CD4-positive, alpha-beta T cell (primary cell): ENCODE measurements at regions of chr12 and their contacts with region 1.

Region 1: DNA sequence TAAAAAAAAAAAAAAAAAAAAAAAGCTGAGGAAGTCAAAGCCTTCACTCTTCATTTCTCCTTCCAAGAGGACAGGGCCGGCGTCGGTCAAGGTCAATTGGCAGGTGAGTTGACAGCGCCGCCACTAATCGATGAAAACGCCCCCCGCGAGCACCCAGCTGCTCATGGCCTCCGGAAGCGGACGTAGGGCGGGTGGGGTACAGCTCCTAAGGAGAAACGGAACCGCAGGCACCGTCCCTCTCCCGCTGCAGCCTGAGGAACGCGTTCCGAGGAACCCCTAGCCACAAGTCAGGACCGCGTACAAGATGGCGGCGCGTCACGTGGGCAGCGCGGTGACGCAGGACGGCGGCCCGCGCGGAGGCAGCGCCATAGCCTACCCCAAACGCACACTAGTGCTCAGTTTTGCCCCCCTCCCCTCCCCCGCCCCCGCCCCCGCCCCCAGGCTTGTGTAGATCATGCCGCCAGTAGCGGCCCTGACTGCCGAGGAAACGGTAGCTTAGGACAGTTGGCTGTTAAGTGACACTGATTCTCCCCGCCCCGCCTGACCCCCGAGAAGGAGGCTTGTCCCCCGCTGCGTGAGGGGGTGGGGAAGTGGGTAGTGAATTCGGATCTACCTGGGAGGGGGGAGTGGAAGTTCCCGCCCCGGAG is at the start of gene ATF1:
- DNase-seq: peak; percentile 79 to 96 (median 86)
- ATAC-seq: peak; percentile 76
- H3K4me3 ChIP-seq: peak within 1 kb of the TSS; percentile 83
- H3K4me3 Mint-ChIP-seq: peak within 1 kb of the TSS; percentile 91
- H3K27ac ChIP-seq: peak within 1 kb of the TSS; percentile 92 to 96
- H3K27ac Mint-ChIP-seq: peak within 1 kb of the TSS; percentile 93
- H3K4me1 ChIP-seq: peaks cover 27% of the 10 kb centered on the region
- H3K4me1 Mint-ChIP-seq: peaks cover 50% of the 10 kb centered on the region
- H3K27me3 ChIP-seq: no peaks in the 10 kb centered on the region
- H3K27me3 Mint-ChIP-seq: no peaks in the 10 kb centered on the region
- CTCF ChIP-seq: no peak
- total RNA-seq, gene ATF1: 11.3 TPM

Region 2: GRCh38 chr12:50111693-50112455 is 651.9 kb before region 1 on chr12 and contains the start of gene COX14:
- CTCF ChIA-PET with region 1: interaction called, 3 read pairs
- POLR2A ChIA-PET with region 1: interaction called, 15 read pairs
- intact Hi-C with region 1: no loop called
- DNase-seq: peak; percentile 97 to 100 (median 99)
- ATAC-seq: peak; percentile 83
- H3K4me3 ChIP-seq: peak within 1 kb of the TSS; percentile 100
- H3K4me3 Mint-ChIP-seq: peak within 1 kb of the TSS; percentile 95
- H3K27ac ChIP-seq: peak within 1 kb of the TSS; percentile 87 to 97
- H3K27ac Mint-ChIP-seq: peak within 1 kb of the TSS; percentile 96
- H3K4me1 ChIP-seq: peaks cover 55% of the 10 kb centered on the region
- H3K4me1 Mint-ChIP-seq: peaks cover 39% of the 10 kb centered on the region
- H3K27me3 ChIP-seq: no peaks in the 10 kb centered on the region
- H3K27me3 Mint-ChIP-seq: no peaks in the 10 kb centered on the region
- CTCF ChIP-seq: peak; percentile 97
- total RNA-seq, gene COX14: 51.1 to 52.8 TPM

Region 3: GRCh38 chr12:50751948-50752721 is 11.6 kb before region 1 on chr12:
- CTCF ChIA-PET with region 1: interaction called, 4 read pairs
- POLR2A ChIA-PET with region 1: interaction called, 11 read pairs
- intact Hi-C with region 1: no loop called
- DNase-seq: no peak
- ATAC-seq: no peak
- H3K4me3 ChIP-seq: no peak overlapping the region
- H3K4me3 Mint-ChIP-seq: no peak overlapping the region
- H3K27ac ChIP-seq: no peak overlapping the region
- H3K27ac Mint-ChIP-seq: no peak overlapping the region
- H3K4me1 ChIP-seq: no peaks in the 10 kb centered on the region
- H3K4me1 Mint-ChIP-seq: no peaks in the 10 kb centered on the region
- H3K27me3 ChIP-seq: no peaks in the 10 kb centered on the region
- H3K27me3 Mint-ChIP-seq: no peaks in the 10 kb centered on the region
- CTCF ChIP-seq: no peak

Region 4: DNA sequence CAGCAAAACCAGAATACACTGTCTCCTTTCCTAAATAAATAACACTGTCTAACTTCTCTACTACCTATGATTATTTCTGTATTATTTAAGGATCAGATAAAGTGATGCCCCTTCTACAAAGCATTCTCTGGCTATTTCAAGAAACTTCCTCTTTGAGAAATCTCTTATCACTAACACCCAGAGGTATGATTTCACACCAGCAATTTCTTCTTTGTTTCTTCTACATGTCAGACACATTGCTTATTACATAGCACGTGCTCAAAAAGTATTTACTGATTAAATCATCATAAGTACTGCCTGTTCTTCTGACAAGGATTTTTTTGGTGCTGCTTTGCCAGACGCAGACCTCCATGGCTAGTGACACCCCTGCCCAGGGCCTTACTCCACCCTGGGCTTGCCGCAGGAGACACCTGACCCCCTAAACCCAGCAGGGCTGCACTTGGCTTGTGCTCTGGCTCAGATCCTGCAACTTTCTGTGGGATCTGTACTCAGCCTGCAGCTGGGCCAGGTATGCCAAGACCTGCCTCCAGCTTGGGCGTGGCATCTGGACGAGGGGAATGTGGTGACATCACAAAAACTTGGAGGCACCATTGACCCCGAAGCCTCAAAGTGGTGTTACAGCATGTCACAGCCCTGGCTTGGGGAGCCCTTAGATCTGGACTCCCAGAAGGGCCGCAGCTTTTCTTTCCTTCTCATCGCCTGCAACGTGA is 173.2 kb after region 1 on chr12:
- CTCF ChIA-PET with region 1: no interaction called
- POLR2A ChIA-PET with region 1: no interaction called
- intact Hi-C with region 1: no loop called
- DNase-seq: no peak
- ATAC-seq: no peak
- H3K4me3 ChIP-seq: no peak overlapping the region
- H3K4me3 Mint-ChIP-seq: no peak overlapping the region
- H3K27ac ChIP-seq: no peak overlapping the region
- H3K27ac Mint-ChIP-seq: no peak overlapping the region
- H3K4me1 ChIP-seq: no peaks in the 10 kb centered on the region
- H3K4me1 Mint-ChIP-seq: no peaks in the 10 kb centered on the region
- H3K27me3 ChIP-seq: no peaks in the 10 kb centered on the region
- H3K27me3 Mint-ChIP-seq: no peaks in the 10 kb centered on the region
- CTCF ChIP-seq: no peak

Region 5: DNA sequence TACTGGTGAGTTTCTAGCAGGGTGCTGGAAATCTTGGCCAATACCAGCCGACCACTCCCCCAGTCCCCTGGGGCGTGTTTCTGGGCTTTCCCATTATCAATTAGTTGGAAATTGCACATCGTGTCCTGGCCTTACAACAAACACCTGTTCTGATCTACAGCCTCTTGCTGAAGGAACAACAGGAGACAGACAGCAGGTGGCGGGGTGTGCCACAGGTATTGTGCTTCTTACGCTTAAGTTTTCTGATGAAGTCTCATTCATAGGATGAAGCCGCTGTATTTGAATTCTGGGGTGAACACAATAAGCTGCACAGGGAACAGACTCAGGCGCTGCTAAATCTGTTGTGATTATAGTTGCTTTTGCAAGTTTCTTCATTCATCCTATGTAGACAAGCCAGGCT is 189.3 kb after region 1 on chr12:
- CTCF ChIA-PET with region 1: no interaction called
- POLR2A ChIA-PET with region 1: no interaction called
- intact Hi-C with region 1: no loop called
- DNase-seq: peak in 1 of 14 experiments; percentile 4
- ATAC-seq: no peak
- H3K4me3 ChIP-seq: no peak overlapping the region
- H3K4me3 Mint-ChIP-seq: no peak overlapping the region
- H3K27ac ChIP-seq: no peak overlapping the region
- H3K27ac Mint-ChIP-seq: no peak overlapping the region
- H3K4me1 ChIP-seq: no peaks in the 10 kb centered on the region
- H3K4me1 Mint-ChIP-seq: no peaks in the 10 kb centered on the region
- H3K27me3 ChIP-seq: no peaks in the 10 kb centered on the region
- H3K27me3 Mint-ChIP-seq: no peaks in the 10 kb centered on the region
- CTCF ChIP-seq: no peak

Region 6: DNA sequence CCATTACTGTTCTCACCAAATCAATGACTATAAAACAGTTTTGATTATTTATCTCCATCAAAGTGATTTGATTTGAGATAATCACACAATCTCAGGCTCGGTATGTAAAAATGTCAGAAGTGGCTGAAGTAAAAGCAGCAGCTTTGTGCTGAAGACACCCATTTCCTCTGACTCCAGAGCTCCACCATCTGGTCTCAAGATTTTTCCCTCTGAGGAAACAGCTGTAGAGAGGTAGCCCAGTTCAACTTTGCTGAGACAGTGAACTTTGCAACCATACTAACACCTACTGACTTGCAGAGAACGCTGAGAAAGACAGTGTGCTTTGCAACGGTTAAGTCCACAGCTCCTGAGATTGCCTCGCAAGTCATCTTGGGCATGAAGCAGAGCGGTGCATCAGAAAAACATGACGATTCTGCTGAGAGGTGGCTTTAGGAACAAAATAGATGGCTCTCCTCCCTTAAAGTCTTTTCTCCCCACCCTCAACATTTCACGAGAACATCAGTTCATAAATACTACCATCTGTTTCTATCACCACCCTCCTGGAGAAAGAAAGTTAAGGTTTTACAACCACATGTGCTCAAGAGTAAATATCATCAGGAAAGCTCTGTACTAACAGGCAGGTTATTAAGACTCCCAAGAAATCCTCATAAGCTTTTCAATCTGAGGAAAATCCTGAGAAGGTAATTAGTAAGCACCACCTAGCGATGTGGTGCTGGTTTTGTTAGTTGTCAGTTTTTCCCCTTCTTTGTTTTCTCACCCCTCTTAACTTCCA is 223.4 kb after region 1 on chr12:
- CTCF ChIA-PET with region 1: interaction called, 6 read pairs
- POLR2A ChIA-PET with region 1: interaction called, 17 read pairs
- intact Hi-C with region 1: loop called (anchors 1 to 2 kb)
- DNase-seq: peak in 10 of 14 experiments; percentile 5 to 59 (median 11)
- ATAC-seq: peak; percentile 78
- H3K4me3 ChIP-seq: no peak overlapping the region
- H3K4me3 Mint-ChIP-seq: no peak overlapping the region
- H3K27ac ChIP-seq: no peak overlapping the region
- H3K27ac Mint-ChIP-seq: peak overlapping the region; percentile 65
- H3K4me1 ChIP-seq: no peaks in the 10 kb centered on the region
- H3K4me1 Mint-ChIP-seq: peaks cover 9% of the 10 kb centered on the region
- H3K27me3 ChIP-seq: no peaks in the 10 kb centered on the region
- H3K27me3 Mint-ChIP-seq: no peaks in the 10 kb centered on the region
- CTCF ChIP-seq: peak; percentile 58

Region 7: DNA sequence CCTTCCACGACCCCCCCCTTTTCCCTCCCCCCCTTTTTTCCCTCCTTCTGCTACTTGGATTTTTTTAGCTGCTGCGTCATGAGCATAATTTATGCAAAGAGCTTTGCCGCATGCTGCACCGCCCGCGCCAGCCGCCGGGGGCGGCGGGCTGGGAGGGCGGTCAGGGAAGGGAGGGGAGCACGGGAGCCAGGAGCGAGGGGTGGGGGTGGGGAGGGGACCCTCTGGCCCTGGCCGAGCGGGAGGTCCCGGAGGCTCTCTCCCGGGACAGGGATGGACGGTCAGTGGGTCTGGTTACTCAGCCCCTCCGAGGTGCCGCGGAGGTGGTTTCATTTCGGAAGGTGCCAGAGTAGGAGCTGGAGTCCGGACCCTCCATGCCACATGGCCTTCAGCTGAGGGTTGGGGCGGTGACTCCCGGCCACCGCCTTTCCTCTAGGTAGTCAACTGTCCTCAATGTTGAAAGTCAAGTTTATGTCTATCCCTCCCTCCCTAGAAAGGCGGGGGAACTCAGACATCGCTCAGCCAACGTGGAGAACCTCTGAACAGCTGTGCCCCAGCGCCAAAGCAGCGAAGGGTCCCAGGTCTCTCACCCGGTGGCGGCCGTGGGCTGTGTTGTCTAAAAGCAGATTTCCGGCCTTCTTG is 454.3 kb after region 1 on chr12 and contains the start of gene POU6F1:
- CTCF ChIA-PET with region 1: no interaction called
- POLR2A ChIA-PET with region 1: interaction called, 10 read pairs
- intact Hi-C with region 1: no loop called
- DNase-seq: peak; percentile 53 to 90 (median 66)
- ATAC-seq: peak; percentile 83
- H3K4me3 ChIP-seq: peak within 1 kb of the TSS; percentile 98
- H3K4me3 Mint-ChIP-seq: peak within 1 kb of the TSS; percentile 94
- H3K27ac ChIP-seq: peak within 1 kb of the TSS; percentile 86 to 92
- H3K27ac Mint-ChIP-seq: peak within 1 kb of the TSS; percentile 98
- H3K4me1 ChIP-seq: peaks cover 16% of the 10 kb centered on the region
- H3K4me1 Mint-ChIP-seq: peaks cover 33% of the 10 kb centered on the region
- H3K27me3 ChIP-seq: no peaks in the 10 kb centered on the region
- H3K27me3 Mint-ChIP-seq: no peaks in the 10 kb centered on the region
- CTCF ChIP-seq: peak; percentile 60
- total RNA-seq, gene POU6F1: 31.7 to 36.8 TPM

Region 8: DNA sequence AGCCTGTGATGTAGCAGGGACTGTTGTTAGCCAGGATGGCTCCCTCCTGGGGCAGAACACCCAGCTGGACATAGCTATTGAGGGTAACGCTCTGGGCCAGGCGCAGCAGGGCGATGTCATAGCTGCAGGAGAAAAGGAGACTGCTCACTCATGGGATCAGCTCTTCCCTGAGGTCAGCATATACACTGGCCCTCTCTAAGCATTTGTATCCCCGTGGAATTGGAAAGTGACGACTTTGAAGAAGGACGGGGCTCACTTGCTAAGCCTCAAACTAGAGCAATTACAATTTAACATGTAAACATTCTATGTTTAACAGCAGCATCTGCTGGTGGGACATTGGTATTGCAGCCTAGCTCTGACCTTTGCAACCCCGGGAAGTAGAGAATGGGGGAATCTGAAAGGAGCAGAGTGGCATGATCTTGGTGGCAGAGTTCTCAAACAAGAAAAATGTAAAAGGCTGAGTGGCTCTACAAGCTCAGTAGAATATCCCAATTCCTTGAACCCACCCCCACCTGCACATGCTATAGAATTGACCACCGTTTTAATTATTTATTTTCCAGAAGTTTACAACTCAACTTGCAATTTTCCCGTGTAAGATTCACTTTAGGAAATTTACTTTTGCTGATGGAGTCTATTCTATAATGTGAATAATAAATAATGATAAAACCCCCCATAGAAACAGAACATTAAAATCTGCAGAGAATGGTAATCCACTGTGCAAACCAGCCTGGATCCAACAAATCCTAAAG is 577.7 kb after region 1 on chr12:
- CTCF ChIA-PET with region 1: no interaction called
- POLR2A ChIA-PET with region 1: no interaction called
- intact Hi-C with region 1: loop called in 1 of 2 experiments (anchors 10 kb)
- DNase-seq: peak; percentile 57 to 86 (median 65)
- ATAC-seq: peak; percentile 98
- H3K4me3 ChIP-seq: no peak overlapping the region
- H3K4me3 Mint-ChIP-seq: peak overlapping the region; percentile 42
- H3K27ac ChIP-seq: no peak overlapping the region
- H3K27ac Mint-ChIP-seq: peak overlapping the region; percentile 51
- H3K4me1 ChIP-seq: peaks cover 17% of the 10 kb centered on the region
- H3K4me1 Mint-ChIP-seq: peaks cover 11% of the 10 kb centered on the region
- H3K27me3 ChIP-seq: no peaks in the 10 kb centered on the region
- H3K27me3 Mint-ChIP-seq: no peaks in the 10 kb centered on the region
- CTCF ChIP-seq: peak; percentile 97